H1 (cell line): ENCODE measurements at regions of chr12 and their contacts with region 1.

Region 1: DNA sequence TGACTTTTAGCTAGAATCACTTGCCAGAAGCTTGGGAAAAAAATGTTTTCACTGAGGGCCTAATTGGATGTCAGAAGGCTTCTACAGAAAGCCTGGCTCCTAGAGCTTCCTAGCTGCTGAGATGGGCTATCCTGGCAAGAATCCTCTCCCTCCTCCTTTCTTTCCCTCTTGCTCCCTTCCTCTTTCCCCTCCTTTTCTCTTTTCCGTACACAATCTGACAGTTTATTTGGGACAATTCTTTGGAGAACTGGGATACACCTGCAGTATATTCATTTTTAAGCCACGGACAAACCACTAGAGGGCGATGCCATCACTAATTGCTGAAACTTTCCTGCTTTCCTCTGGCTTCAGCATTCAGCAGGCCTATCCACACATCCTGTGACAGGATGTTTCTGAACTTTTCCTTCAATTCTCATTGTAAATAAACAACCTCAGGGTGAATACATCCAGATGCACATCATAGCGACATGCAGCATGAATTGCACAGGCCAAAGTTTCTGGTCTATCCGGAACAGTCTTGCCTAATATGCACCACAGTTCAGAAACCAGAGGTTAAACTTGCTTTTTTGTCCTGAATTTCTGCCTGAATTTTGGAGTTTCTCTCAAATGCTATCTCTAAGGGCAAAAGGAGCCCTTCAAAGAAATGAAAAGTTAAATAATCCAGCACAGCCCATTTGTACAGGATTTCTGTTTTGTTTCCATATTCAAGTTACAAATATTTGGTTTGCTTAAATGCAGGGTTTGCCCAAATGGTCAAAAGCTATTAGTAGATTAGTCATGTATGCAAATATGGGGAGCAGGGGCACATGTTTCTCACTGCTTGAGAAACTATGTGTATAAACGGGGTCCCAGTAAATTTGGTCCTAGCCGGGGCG is 142.8 kb downstream of the PAWR start:
- DNase-seq: peak in 1 of 2 experiments; percentile 46
- H3K4me3 ChIP-seq: peak overlapping the region in 1 of 4 experiments; percentile 42; a peak in 2 of 8 replicates
- H3K27ac ChIP-seq: peak overlapping the region; percentile 99
- H3K4me1 ChIP-seq: peaks cover 13 to 21% (median 16%) of the 10 kb centered on the region in 4 experiments; a peak in 4 of 7 replicates
- H3K27me3 ChIP-seq: no peaks in the 10 kb centered on the region
- CTCF ChIP-seq: peak in 2 of 3 experiments; percentile 43 to 74; a peak in 3 of 4 replicates
- EP300 ChIP-seq: no peak
- POLR2A ChIP-seq: peak in 1 of 2 experiments; percentile 90; a peak in 2 of 3 replicates
- RAD21 ChIP-seq: peak; percentile 63 to 69

Region 2: DNA sequence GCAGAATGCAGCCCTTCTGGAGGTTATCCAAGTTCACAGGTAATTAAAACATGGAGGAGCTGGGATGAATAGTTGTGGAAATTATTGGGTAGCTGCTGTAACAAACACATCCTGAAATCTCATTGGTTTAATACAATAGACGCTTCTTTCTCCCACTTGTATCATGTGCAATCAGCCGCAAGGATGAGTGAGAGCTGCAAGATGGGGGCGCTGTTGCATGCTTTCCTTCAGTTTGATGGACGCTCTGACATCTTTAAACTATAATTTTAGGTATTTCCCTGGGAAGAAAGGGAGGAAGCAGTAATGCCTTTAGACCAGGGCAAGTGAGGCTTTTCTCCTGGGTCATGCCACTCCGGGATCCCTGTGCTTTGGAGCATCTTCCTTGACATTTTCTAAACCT is 35.9 kb before region 1 on chr12:
- CTCF ChIA-PET with region 1: interaction called, 14 read pairs
- POLR2A ChIA-PET with region 1: interaction called, 7 read pairs
- DNase-seq: peak; percentile 17 to 78
- H3K4me3 ChIP-seq: no peak overlapping the region
- H3K27ac ChIP-seq: no peak overlapping the region
- H3K4me1 ChIP-seq: peaks cover 1 to 11% (median 4%) of the 10 kb centered on the region in 4 experiments; a peak in 4 of 7 replicates
- H3K27me3 ChIP-seq: no peaks in the 10 kb centered on the region
- CTCF ChIP-seq: peak; percentile 64 to 77 (median 66)
- EP300 ChIP-seq: no peak
- POLR2A ChIP-seq: no peak
- RAD21 ChIP-seq: peak; percentile 76 to 82

Region 3: GRCh38 chr12:79531122-79531913 is 16.7 kb before region 1 on chr12:
- CTCF ChIA-PET with region 1: interaction called, 7 read pairs
- POLR2A ChIA-PET with region 1: interaction called, 11 read pairs
- DNase-seq: no peak
- H3K4me3 ChIP-seq: no peak overlapping the region
- H3K27ac ChIP-seq: no peak overlapping the region
- H3K4me1 ChIP-seq: no peaks in the 10 kb centered on the region; a peak in 1 of 7 replicates
- H3K27me3 ChIP-seq: no peaks in the 10 kb centered on the region
- CTCF ChIP-seq: no peak
- EP300 ChIP-seq: no peak
- POLR2A ChIP-seq: no peak
- RAD21 ChIP-seq: no peak

Region 4: DNA sequence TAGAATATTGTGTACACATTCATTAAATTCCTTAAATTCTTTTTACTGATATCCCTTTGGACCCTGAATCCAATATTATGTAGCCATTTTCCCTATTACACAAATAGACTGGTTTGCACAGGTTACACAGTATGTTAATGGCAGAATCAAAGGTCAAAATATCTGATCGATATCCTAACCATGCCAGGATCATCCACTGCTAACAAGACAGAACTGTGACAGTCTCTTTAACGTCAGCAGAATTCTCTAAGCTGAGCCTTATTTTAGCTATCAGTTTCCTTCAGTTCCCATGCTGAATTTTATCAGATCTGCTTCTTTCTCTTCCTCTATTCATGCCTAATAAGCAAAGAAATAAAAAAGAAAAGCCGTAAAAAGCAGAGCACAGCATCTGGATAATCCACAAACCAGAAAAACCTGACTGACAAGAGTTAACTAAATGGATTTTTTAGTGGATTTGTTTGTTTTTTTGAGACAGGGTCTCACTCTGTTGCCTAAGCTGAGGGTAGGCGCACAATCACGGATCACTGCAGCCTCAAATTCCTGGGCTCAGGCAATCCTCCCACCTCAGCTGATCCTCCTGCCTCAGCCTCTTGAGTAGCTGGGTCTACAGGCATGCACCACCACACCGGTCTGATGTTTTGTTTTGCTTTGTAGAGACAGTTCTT is 12.4 kb after region 1 on chr12:
- CTCF ChIA-PET with region 1: interaction called, 6 read pairs
- POLR2A ChIA-PET with region 1: interaction called, 11 read pairs
- DNase-seq: no peak
- H3K4me3 ChIP-seq: no peak overlapping the region
- H3K27ac ChIP-seq: no peak overlapping the region
- H3K4me1 ChIP-seq: peaks cover 0 to 8% (median 2%) of the 10 kb centered on the region in 4 experiments; a peak in 3 of 7 replicates
- H3K27me3 ChIP-seq: no peaks in the 10 kb centered on the region
- CTCF ChIP-seq: no peak
- EP300 ChIP-seq: no peak
- POLR2A ChIP-seq: no peak
- RAD21 ChIP-seq: no peak

Region 5: DNA sequence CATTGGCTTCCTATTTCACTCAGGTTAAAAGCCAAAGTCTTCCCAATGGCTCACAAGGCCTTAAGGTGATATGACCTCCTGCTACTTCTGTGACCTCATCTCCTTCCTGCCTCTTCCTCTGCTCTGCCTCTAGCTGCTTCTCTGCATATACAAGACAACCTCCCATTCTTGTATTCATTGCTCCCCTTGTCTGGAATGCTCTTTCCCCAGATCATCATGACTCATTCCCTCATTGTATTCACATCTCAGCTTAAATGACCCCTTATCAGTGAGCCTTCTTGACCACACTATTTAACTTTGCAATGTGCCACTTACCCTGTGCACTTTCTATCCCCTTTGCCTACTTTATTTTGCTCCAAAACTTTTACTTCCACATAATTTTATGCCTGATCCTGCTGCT is 296.7 kb after region 1 on chr12:
- CTCF ChIA-PET with region 1: no interaction called
- POLR2A ChIA-PET with region 1: no interaction called
- DNase-seq: peak in 1 of 2 experiments; percentile 29
- H3K4me3 ChIP-seq: no peak overlapping the region
- H3K27ac ChIP-seq: no peak overlapping the region; the same call in 1 of the 2 replicates
- H3K4me1 ChIP-seq: peaks cover 0 to 6% (median 2%) of the 10 kb centered on the region in 4 experiments; a peak in 3 of 7 replicates
- H3K27me3 ChIP-seq: no peaks in the 10 kb centered on the region
- CTCF ChIP-seq: no peak
- EP300 ChIP-seq: no peak
- POLR2A ChIP-seq: no peak
- RAD21 ChIP-seq: no peak